Right ventricle myocardium inferior (tissue), 1 donor: ENCODE measurements at regions of chr7 and their contacts with region 1.

Region 1: DNA sequence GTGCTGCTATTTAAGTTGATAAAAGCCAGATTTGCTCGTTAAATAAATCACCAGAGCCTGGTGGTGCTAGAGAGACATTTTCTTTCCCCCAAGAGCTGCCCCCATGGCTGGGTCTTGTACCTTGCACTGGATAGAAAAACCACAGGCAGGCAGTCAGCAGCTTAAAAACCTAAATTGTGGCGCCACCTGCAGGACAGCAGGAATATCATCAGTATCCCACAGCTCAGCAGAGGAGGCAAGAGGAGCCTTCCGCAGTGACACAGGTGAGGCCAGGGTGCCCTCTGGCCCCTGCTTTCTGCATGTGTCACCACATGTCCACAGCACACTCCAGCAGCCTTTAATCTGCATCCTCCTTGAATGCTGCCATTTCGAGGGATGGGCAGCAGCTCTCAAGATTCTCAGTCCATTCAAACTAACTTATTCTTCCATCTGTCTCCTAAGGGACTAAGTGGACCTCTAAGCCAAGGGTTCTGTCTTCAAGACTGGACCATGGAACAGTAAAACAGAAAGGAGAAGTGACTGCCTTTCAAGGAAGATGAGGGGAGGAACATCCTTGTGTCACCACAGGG is 4.5 kb upstream of the PLXNA4 start:
- DNase-seq: peak; percentile 53
- ATAC-seq: peak; percentile 56

Region 2: GRCh38 chr7:131945313-131945911 is 635.4 kb before region 1 on chr7:
- intact Hi-C with region 1: loop called (anchors 2 kb)
- DNase-seq: no peak
- ATAC-seq: peak; percentile 14

Region 3: GRCh38 chr7:132004536-132005272 is 576.1 kb before region 1 on chr7:
- intact Hi-C with region 1: loop called (anchors 5 kb)
- DNase-seq: no peak
- ATAC-seq: peak; percentile 74

Region 4: DNA sequence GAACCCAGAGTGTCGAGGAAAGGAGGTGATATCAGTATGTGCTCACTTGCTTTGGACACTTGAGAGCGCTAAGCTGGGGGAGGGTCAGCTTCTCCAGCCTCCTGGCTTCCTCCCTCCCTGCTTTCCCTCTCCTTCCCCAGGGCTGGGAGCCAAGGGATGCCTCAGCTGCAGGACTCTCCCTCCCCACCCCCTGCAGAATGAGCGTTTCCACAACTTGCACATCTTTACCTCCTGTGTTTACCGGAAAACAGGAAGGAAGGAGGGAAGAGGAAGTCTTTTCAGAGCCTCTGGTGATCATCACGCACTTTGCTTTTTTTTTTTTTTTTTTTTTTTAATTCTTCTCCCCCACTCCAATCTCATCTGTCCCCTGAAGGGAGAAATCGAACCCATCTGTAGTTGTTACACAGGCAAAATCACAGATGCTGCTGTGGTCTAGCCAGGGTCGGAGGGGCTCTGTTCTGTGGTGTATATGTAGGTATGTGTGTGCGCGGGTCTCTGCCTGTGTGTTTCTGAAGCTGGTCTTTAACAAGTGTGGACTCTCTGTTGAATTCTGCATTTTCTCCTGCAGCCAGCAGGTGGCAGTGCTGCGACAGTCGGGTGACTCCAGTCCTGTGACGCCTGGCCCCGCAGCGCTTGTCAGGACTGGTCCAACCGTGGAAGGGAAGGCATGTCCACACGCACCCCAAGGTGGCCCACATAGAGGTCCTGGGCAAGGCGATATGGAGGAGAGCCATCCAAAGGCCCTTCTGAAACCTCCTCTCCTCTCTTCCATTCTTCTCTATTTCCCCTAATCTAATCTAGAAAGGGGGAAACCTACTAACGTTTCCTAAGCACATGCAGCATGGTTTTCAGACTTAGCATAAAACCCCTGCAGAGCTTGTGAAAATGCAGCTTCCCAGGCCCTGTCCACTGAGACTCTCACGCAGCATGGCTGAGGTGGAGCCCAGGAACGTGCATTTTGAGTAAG is 262.2 kb before region 1 on chr7:
- intact Hi-C with region 1: loop called (anchors 2 kb)
- DNase-seq: peak; percentile 90
- ATAC-seq: peak; percentile 91

Region 5: GRCh38 chr7:132394283-132395198 is 186.3 kb before region 1 on chr7:
- intact Hi-C with region 1: loop called (anchors 5 kb)
- DNase-seq: no peak
- ATAC-seq: peak; percentile 3

Region 6: GRCh38 chr7:132437730-132438129 is 143.1 kb before region 1 on chr7:
- intact Hi-C with region 1: loop called (anchors 5 kb)
- DNase-seq: no peak
- ATAC-seq: peak; percentile 47

Region 7: GRCh38 chr7:132500727-132501440 is 79.9 kb before region 1 on chr7:
- intact Hi-C with region 1: loop called (anchors 5 kb)
- DNase-seq: peak; percentile 80
- ATAC-seq: peak; percentile 85

Region 8: GRCh38 chr7:132603220-132603833 is 22.5 kb after region 1 on chr7:
- intact Hi-C with region 1: no loop called
- DNase-seq: no peak
- ATAC-seq: no peak